ENCODE measurements at regions of chr17 and their contacts with region 1.

Region 1: DNA sequence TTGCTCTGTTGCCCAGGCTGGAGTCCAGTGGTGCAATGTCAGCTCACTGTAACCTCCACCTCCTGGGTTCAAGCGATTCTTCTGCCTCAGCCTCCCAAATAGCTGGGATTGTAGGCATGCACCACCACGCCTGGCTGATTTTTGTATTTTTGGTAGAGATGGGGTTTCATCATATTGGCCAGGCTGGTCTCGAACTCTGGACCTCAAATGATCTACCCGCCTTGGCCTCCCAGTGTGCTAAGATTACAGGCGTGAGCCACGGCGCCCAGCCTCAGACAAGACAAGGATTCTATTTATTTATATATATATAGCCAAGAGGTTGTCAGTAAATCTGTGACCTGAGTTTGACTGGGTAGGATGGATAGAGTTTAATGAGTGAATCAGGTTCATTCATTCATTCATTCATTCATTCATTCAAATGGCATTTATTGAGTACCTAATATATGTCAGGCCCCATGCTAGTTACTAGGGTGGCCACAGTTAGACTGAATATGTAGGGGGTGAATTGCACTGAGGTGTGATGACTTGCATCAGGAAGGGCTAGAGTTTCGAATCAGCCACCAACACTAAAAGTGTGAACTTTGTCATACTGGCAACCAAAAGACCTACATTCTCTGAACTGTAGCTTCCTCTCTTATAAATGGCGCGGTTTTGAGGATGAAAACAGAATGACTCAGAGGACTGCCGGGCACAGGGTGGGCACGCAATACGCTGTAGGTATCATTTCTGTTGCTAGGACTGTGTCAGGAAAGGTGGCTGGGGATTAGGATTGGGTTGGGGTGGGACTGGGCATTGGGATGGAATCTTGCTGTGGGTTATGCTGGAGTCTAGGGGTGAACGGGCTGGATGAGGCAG is 37.8 kb downstream of the ITGAE start:
- DNase-seq: peak; percentile 24
- H3K4me3 Mint-ChIP-seq: peak overlapping the region; percentile 64
- H3K27ac Mint-ChIP-seq: peak overlapping the region; percentile 91
- H3K4me1 Mint-ChIP-seq: peaks cover 42% of the 10 kb centered on the region
- H3K27me3 Mint-ChIP-seq: no peaks in the 10 kb centered on the region

Region 2: DNA sequence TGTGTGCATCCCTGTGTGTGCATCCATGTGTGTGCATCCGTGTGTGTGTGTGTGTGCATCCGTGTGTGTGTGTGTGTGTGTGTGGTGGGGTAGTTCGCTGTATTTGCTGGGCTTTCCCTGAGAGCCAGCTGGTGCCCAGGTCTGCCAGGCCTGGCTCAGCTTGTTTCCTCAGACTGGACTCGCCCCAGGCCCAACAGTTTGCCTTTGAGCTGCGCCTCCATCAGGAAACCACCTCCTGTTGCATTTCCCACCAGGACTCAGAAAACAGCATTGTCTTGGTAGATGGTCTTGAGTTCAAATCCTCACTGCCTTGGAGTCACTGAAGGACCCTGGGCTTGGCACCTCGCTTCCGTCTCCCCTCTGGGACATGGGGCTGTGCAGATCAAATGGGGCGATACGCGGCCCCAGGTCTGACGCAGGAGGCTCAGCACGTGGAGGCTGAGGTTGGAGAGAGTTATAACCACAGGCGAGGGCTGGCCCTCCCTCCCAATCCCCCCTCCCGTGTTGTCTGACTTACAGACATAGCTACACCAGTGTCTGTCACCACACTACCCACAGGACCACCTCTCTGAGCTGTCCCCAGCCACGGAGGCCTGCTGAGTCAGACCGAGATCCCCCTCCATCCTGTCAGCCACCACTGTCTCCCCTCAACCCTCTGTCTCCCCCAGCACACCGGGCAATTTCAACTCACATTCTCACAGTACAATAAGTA is 33.1 kb after region 1 on chr17:
- intact Hi-C with region 1: loop called (anchors 1 kb)
- DNase-seq: peak; percentile 68
- H3K4me3 Mint-ChIP-seq: no peak overlapping the region
- H3K27ac Mint-ChIP-seq: peak overlapping the region; percentile 10
- H3K4me1 Mint-ChIP-seq: peaks cover 50% of the 10 kb centered on the region
- H3K27me3 Mint-ChIP-seq: no peaks in the 10 kb centered on the region

Measured in activated T-helper 2 cell treated with anti-CD3 and anti-CD28 coated beads, Interferon-gamma antibody, Interleukin-2, Interleukin-4, amounts not matched to agents 10 μg/mL and 5 μg/mL and 100 μg/mL, durations not matched to agents 14 hours and 24 hours and 36 hours (primary cell).